ENCODE measurements at regions of chr10 and their contacts with region 1.

Region 1: DNA sequence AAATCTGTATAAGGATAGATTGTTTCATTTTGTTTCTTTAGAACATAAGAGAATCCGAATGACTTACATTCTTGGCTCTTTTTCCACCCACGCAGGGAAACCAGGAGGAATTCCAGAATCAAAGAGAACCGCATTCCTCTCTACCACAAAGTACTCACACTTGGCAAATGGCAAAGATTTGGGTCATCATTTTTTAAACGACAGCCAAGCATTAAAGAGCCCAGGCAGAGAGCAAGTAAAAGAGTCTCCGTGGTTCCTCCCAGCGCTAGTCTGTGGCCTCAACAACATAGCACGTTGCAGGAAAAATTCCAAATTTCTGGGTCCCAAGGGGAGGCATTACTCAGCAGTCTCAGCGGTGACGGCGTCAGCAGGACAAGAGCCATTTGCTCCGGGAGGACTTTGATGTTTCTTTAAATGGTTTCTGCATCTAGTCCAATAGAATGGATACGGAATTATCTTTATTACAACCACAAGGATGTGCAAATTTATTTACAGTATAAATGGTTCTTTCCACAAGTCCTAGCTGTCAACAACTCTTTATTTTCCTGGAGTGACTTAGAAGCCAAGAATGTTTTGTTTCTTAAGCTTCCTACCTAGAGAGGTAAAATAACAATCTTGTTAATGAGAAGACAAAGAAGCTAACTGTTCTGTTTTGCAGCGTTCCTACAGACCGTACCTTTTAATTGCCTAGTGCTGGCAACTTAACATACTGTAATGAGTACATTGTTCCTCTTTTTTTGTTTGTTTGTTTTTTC is 232.5 kb downstream of the SKIDA1 start:
- DNase-seq: peak; percentile 82
- H3K4me3 ChIP-seq: peak overlapping the region; percentile 2 to 57 (median 32)
- H3K27ac ChIP-seq: peak overlapping the region; percentile 83
- H3K4me1 ChIP-seq: peaks cover 19% of the 10 kb centered on the region
- H3K27me3 ChIP-seq: no peaks in the 10 kb centered on the region
- CTCF ChIP-seq: no peak
- POLR2A ChIP-seq: no peak

Region 2: DNA sequence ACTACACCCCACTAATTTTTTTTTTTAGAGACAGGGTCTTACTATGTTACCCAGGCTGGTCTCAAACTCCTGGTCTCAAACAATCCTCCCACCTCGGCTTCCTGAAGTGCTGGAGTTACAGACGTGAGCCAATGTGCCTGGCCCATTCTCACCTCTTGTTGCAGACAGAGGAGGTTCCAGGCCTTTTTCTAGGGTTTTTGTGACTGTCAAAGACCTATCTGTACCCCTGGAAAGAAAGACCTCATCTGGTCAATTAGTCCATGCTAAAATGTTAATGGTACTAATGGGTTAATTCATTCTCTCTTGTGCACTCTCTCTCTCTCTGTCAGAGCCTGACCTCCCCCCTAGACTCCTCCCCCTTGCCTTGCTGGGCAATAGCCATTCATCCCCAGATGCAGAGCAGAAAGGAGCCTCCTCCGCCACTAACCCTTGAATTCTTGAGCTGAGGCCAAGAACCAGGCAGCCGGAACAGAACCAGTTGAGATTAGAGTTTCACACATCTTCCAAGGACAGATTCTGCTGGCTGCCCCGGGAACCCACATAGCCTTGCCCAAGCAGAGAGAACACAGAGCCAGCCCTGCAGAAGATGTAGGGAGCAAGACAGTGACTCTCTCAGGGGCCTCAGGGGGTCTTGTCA is 22.8 kb after region 1 on chr10:
- CTCF ChIA-PET with region 1: interaction called, 4 read pairs
- POLR2A ChIA-PET with region 1: no interaction called
- dilution Hi-C with region 1: no loop called
- intact Hi-C with region 1: loop called (anchors 1 kb)
- DNase-seq: peak; percentile 90
- H3K4me3 ChIP-seq: no peak overlapping the region
- H3K27ac ChIP-seq: peak overlapping the region; percentile 50
- H3K4me1 ChIP-seq: peaks cover 24% of the 10 kb centered on the region
- H3K27me3 ChIP-seq: no peaks in the 10 kb centered on the region
- CTCF ChIP-seq: no peak
- POLR2A ChIP-seq: peak; percentile 31

Region 3: GRCh38 chr10:21372651-21373410 is 79.9 kb after region 1 on chr10:
- CTCF ChIA-PET with region 1: interaction called, 3 read pairs
- POLR2A ChIA-PET with region 1: interaction called, 3 read pairs
- dilution Hi-C with region 1: no loop called
- intact Hi-C with region 1: loop called (anchors 1 kb)
- DNase-seq: peak; percentile 88
- H3K4me3 ChIP-seq: peak overlapping the region in 1 of 3 experiments; percentile 15
- H3K27ac ChIP-seq: peak overlapping the region; percentile 14
- H3K4me1 ChIP-seq: peaks cover 26% of the 10 kb centered on the region
- H3K27me3 ChIP-seq: no peaks in the 10 kb centered on the region
- CTCF ChIP-seq: no peak
- POLR2A ChIP-seq: no peak

Measured in endothelial cell of umbilical vein (primary cell).